ENCODE measurements at regions of chr1 and their contacts with region 1.

Region 1: DNA sequence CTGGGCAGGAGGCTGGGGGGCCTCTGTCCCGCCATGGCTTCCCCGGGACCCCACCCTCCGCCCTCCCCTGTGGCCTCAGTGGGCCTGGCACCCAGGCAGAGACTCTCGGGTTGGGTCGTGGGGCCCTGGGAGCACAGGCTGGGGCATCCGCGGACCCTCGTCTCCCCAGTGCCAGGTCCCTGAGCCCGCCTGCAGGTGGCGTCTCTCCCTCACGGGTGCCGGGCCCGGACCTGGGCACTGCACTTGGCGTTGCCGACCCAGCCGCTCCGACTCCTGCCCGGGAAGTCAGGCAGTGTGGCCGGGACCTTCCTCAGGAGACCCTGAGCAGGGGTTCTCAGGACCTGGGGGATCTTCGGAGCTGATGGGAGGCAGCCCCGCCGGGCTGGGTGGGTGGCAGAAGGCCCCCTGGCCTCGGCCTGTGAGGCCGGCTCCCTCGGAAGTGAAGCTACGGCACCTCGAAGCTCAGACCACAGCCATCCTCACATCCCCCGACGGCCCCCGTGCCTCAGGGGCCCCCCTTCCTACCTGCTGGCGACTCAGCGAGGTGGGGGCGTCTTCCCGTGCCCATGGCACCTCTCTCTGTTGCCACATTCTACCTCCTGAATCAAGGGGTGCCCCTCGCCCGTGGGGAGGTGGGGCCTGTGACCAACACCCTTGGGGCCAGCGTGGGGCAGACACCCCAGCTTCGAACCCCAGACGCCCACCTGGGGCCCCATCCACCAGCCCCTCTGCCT is 6.4 kb upstream of the C1orf159 start:
- H3K4me3 ChIP-seq: no peak overlapping the region
- H3K27ac ChIP-seq: no peak overlapping the region
- H3K4me1 ChIP-seq: no peaks in the 10 kb centered on the region
- CTCF ChIP-seq: peak; percentile 95

Region 2: GRCh38 chr1:1040004-1040991 is 81.9 kb before region 1 on chr1:
- CTCF ChIA-PET with region 1: no interaction called
- POLR2A ChIA-PET with region 1: no interaction called
- H3K4me3 ChIP-seq: no peak overlapping the region
- H3K27ac ChIP-seq: no peak overlapping the region
- H3K4me1 ChIP-seq: no peaks in the 10 kb centered on the region
- CTCF ChIP-seq: no peak

Region 3: DNA sequence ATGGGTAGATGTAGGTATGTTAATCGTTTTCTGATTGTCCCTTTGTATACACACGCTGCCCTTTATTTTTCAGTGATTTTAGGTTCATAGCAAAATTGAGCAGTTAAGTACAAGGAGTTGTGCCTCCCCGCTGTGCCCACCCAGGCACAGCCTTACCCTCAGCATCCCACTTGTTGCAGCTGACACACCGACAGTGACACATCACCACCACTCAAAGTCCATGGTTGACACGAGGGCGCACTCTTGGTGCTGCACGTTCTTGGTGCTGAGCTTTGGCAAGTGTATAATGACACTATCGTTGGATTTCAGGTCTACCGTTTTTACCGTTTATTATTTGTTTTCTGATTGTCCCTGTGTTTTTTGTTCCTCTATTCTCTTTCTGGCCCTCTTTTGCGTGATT is 21.9 kb before region 1 on chr1:
- CTCF ChIA-PET with region 1: no interaction called
- POLR2A ChIA-PET with region 1: no interaction called
- H3K4me3 ChIP-seq: no peak overlapping the region
- H3K27ac ChIP-seq: no peak overlapping the region
- H3K4me1 ChIP-seq: no peaks in the 10 kb centered on the region
- CTCF ChIP-seq: no peak

Region 4: DNA sequence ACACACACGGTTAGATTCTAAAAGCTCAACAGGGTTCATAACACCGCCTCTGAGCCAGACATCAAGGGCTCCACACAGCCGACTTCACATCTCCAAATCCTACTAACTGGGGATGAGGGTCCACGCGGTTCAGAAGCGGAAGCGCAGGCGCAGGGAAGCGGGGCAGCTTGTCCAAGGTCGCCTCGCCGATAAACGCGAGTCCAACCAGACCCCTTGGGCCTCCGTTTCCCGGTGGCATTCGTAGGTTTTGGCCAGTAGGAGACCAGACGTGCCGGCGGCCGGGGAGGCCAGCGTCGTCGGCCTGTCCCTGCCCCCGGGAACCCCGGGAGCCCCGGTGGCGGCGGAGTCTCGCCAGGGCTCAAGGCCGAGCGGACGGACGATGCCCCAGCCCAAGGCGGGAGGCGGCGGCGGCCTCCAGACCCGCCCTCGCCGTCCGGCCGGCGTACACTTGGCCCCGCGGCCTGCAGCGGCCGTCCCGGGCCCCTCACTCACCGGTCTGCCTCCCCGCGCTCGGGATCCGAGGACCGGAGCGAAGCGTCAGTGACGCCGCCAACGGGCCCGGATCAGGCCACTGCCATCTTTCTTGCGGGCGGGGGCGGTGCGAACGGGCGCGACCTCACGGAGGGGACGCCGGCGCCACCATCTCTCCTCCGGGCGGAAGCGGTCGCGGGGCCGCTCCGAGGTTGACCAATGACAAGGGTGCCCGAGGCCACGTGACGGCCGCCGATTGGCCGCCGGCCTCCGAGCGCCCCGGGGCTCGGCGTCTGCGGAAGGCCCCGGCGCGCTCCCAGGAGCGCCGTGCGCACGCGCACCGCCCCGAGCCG is 109.4 kb after region 1 on chr1 and contains the start of gene SDF4:
- CTCF ChIA-PET with region 1: interaction called, 20 read pairs
- POLR2A ChIA-PET with region 1: interaction called, 3 read pairs
- H3K4me3 ChIP-seq: peak within 1 kb of the TSS; percentile 81
- H3K27ac ChIP-seq: peak within 1 kb of the TSS; percentile 90
- H3K4me1 ChIP-seq: no peaks in the 10 kb centered on the region; the same call in 1 of the 2 replicates
- CTCF ChIP-seq: no peak

Region 5: GRCh38 chr1:1237874-1238701 is 115.8 kb after region 1 on chr1:
- CTCF ChIA-PET with region 1: interaction called, 13 read pairs
- POLR2A ChIA-PET with region 1: interaction called, 4 read pairs
- H3K4me3 ChIP-seq: no peak overlapping the region
- H3K27ac ChIP-seq: no peak overlapping the region; the same call in 1 of the 2 replicates
- H3K4me1 ChIP-seq: no peaks in the 10 kb centered on the region; the same call in 1 of the 2 replicates
- CTCF ChIP-seq: no peak

Region 6: GRCh38 chr1:1250786-1251284 is 128.6 kb after region 1 on chr1:
- CTCF ChIA-PET with region 1: interaction called, 22 read pairs
- POLR2A ChIA-PET with region 1: no interaction called
- H3K4me3 ChIP-seq: no peak overlapping the region
- H3K27ac ChIP-seq: peak overlapping the region; percentile 72
- H3K4me1 ChIP-seq: no peaks in the 10 kb centered on the region; the same call in 1 of the 2 replicates
- CTCF ChIP-seq: no peak

Measured in HEK293 (cell line).